ENCODE measurements at regions of chr18 and their contacts with region 1.

Region 1: GRCh38 chr18:22723773-22724172 is 209.4 kb upstream of the RBBP8 start:
- DNase-seq: no peak
- CTCF ChIP-seq: no peak

Region 2: DNA sequence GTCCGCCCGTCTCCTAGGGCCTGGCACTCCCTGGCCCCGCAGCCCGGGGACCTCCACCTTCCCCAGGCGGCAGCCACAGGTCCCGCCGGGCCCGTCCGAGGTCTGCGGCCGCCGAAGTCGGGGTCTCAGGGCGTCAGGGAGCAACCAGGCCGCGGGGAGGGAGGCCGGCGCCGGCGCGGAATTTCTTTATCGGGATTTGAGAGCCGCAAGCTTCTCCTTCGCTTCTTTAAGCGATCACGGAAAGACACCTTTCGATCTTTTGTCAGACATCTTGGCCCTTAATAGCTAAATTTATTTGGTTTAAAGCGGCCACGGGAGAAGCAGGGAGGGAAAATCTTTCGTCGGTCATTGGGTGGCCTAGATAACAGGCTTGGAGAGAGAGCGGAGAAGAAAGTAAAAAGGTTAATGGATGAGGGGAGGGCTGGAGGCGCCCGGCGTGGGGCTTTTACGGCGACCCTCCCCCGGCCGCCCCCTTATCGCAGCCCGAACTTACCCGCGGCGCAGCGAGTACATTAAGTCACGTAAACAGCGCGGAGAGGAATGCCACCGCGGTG is 558.6 kb before region 1 on chr18:
- CTCF ChIA-PET with region 1: no interaction called
- POLR2A ChIA-PET with region 1: no interaction called
- DNase-seq: no peak
- CTCF ChIP-seq: no peak

Region 3: DNA sequence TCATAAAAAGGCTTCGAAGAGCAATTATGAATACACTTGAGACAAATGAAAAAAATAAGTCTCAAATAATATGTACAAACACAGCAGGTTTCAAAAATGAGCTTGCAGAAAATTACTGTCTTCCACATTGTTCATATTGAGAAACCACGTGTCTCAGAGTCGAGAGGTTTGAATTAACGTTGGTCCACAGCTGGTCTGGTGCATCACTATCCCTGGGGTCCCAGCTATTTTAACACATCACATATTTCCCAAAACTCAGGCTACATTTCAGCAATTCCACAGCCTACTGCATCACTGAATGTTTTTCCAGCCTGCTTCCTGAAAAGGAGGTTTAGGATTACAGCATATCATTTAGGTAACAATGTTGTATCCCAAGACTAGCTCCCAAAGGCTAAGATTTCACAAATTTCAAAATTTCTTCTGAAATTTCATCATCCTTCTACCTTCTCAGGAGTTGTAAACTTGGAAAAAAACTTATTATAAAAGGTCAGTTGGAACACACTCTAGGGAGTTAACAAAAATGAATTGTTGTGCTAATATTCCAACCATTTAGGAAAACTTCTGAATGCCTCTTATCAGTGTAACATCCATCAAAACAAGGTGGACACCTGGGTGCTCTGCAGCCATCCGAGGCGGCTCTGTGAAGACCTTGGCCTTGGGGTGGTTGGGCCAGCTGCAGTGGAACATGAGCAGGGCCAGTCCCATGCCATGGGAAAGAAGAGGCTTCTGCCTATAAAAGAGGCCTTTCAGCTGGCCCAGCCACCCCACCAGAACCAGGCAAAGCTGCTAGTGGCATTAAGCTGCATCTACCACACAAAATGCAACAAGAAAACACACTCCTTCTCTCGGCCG is 11.2 kb after region 1 on chr18:
- CTCF ChIA-PET with region 1: interaction called, 15 read pairs
- POLR2A ChIA-PET with region 1: no interaction called
- DNase-seq: no peak
- CTCF ChIP-seq: no peak